ENCODE measurements at regions of chr5 and their contacts with region 1.

Region 1: GRCh38 chr5:179393078-179393477 is 47.8 kb upstream of the ADAMTS2 start:
- DNase-seq: peak; percentile 88
- H3K4me3 Mint-ChIP-seq: peak overlapping the region; percentile 39
- H3K27ac Mint-ChIP-seq: peak overlapping the region; percentile 95
- H3K4me1 Mint-ChIP-seq: peaks cover 14% of the 10 kb centered on the region
- H3K27me3 Mint-ChIP-seq: no peaks in the 10 kb centered on the region
- CTCF ChIP-seq: no peak

Region 2: GRCh38 chr5:179550511-179551230 is 157.6 kb after region 1 on chr5 and contains the start of gene RUFY1:
- CTCF ChIA-PET with region 1: no interaction called
- POLR2A ChIA-PET with region 1: no interaction called
- intact Hi-C with region 1: loop called (anchors 2 kb)
- DNase-seq: peak; percentile 79
- H3K4me3 Mint-ChIP-seq: peak within 1 kb of the TSS; percentile 89
- H3K27ac Mint-ChIP-seq: peak within 1 kb of the TSS; percentile 93
- H3K4me1 Mint-ChIP-seq: peaks cover 18% of the 10 kb centered on the region
- H3K27me3 Mint-ChIP-seq: no peaks in the 10 kb centered on the region
- CTCF ChIP-seq: no peak
- total RNA-seq, gene RUFY1: 64.7 and 77.0 TPM in 2 replicates

Measured in MCF 10A (cell line).